ENCODE measurements at regions of chrX and their contacts with region 1.

Region 1: GRCh38 chrX:11533211-11533651 is 132.5 kb downstream of the ARHGAP6 start:
- DNase-seq: no peak

Region 2: GRCh38 chrX:11724122-11725017 is 191.1 kb after region 1 on chrX:
- intact Hi-C with region 1: loop called (anchors 5 kb)
- DNase-seq: no peak

Region 3: DNA sequence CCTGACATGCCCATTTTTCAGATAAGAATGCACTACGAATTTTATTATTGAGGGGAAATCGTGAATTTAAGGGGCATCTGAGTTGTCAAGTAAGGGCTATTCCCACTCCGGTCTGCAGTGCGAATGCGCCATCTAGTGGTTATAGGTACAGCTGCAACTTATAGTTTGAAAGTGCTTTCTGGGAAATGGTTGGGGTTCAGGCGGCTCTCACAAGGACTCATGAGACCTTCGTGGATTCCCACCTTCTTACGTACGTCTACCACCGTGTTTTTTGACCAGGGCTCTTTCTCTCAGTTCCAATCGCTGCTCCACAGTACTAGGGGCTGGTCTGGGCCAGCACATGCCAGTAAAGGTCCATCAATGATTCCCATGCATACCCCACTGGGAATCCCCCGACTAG is 237.1 kb after region 1 on chrX:
- intact Hi-C with region 1: loop called (anchors 2 kb)
- DNase-seq: peak in 4 of 10 donors; percentile 19 to 86 (median 24)

Region 4: DNA sequence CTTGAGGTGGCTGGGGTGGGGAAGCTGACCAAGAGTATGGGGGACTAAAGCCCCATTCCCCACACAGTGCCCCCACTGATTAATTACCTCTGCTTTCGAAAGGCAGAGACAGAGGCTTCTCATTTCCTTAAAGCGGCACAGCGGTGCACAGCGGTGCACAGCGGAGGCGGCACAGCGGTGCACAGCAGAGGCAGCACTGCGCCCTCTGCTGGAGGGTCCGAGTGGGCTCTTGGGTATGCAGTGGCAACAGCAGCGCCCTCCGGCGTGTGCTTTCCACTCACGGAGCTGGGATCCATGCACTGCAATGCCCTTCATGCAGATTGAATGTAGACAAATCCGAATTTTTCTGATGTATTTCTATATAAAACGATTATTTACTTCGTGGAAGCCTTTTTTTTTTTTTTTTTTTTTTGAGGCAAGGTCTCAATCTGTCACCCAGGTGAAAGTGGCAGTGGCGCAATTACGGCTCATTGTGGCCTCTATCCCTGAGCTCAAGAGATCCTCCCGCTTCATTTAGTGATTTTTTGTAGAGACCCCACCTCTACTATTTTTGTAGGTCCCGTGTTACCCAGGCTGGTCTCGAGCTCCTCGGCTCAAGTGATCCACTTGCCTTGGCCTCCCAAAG is 1238.3 kb after region 1 on chrX:
- intact Hi-C with region 1: loop called (anchors 10 kb)
- DNase-seq: peak in 2 of 10 donors; percentile 17 to 83

Measured in posterior cingulate gyrus (tissue), 11 donors.